CD14-positive monocyte (primary cell): ENCODE measurements at regions of chr1 and their contacts with region 1.

Region 1: GRCh38 chr1:153749408-153750005 is 21.7 kb downstream of the INTS3 start:
- DNase-seq: peak; percentile 75 to 88 (median 85)
- H3K4me3 ChIP-seq: no peak overlapping the region
- H3K4me3 Mint-ChIP-seq: no peak overlapping the region
- H3K27ac ChIP-seq: no peak overlapping the region
- H3K27ac Mint-ChIP-seq: peak overlapping the region in 3 of 7 donors; percentile 12 to 65 (median 61)
- H3K4me1 ChIP-seq: peaks cover 6 to 9% of the 10 kb centered on the region in 2 donors
- H3K4me1 Mint-ChIP-seq: peaks cover 14% of the 10 kb centered on the region
- H3K27me3 ChIP-seq: no peaks in the 10 kb centered on the region
- H3K27me3 Mint-ChIP-seq: no peaks in the 10 kb centered on the region
- CTCF ChIP-seq: peak; percentile 85

Region 2: GRCh38 chr1:153677718-153678505 is 71.6 kb before region 1 on chr1:
- intact Hi-C with region 1: loop called (anchors 5 kb)
- DNase-seq: peak in 2 of 3 donors; percentile 56 to 57
- H3K4me3 ChIP-seq: peak overlapping the region in 2 of 3 experiments; percentile 28 to 78
- H3K4me3 Mint-ChIP-seq: peak overlapping the region; percentile 84 to 96
- H3K27ac ChIP-seq: no peak overlapping the region
- H3K27ac Mint-ChIP-seq: peak overlapping the region in 1 of 7 donors; percentile 68
- H3K4me1 ChIP-seq: peaks cover 18 to 27% of the 10 kb centered on the region in 2 donors
- H3K4me1 Mint-ChIP-seq: peaks cover 24% of the 10 kb centered on the region
- H3K27me3 ChIP-seq: peaks cover 19 to 41% of the 10 kb centered on the region in 2 donors
- H3K27me3 Mint-ChIP-seq: peaks cover 45 to 48% (median 46%) of the 10 kb centered on the region in 3 donors
- CTCF ChIP-seq: peak; percentile 95

Region 3: GRCh38 chr1:153866045-153866850 is 116.7 kb after region 1 on chr1:
- intact Hi-C with region 1: no loop called
- DNase-seq: no peak
- H3K4me3 ChIP-seq: no peak overlapping the region
- H3K4me3 Mint-ChIP-seq: no peak overlapping the region
- H3K27ac ChIP-seq: no peak overlapping the region
- H3K27ac Mint-ChIP-seq: peak overlapping the region in 3 of 7 donors; percentile 11 to 63 (median 52)
- H3K4me1 ChIP-seq: no peaks in the 10 kb centered on the region
- H3K4me1 Mint-ChIP-seq: peaks cover 4% of the 10 kb centered on the region
- H3K27me3 ChIP-seq: no peaks in the 10 kb centered on the region
- H3K27me3 Mint-ChIP-seq: no peaks in the 10 kb centered on the region
- CTCF ChIP-seq: no peak